Mammary epithelial cell (primary cell): ENCODE measurements at regions of chrX and their contacts with region 1.

Region 1: DNA sequence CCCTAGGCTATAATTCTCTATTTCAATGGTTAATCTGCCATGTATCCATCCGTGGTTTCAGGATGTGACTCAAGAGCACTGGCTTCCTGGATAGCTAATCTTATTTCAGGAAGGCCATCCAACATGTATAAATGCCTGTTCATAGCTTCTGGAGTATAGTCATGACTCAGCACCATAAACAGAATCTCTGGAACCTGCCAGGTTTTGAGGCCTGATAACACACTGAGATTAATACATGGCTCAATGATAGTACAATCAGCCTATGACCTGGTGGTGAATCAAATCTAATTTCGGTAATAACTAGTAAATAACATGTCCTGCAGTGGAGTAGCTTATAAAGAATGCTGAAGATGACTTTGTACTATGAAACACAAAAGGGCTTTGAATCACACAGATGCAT is 5.7 kb upstream of the IL13RA2 start:
- DNase-seq: peak; percentile 90
- H3K4me3 ChIP-seq: no peak overlapping the region
- H3K27ac ChIP-seq: peak overlapping the region; percentile 69
- H3K4me1 ChIP-seq: peaks cover 27% of the 10 kb centered on the region
- H3K27me3 ChIP-seq: no peaks in the 10 kb centered on the region
- CTCF ChIP-seq: no peak

Region 2: DNA sequence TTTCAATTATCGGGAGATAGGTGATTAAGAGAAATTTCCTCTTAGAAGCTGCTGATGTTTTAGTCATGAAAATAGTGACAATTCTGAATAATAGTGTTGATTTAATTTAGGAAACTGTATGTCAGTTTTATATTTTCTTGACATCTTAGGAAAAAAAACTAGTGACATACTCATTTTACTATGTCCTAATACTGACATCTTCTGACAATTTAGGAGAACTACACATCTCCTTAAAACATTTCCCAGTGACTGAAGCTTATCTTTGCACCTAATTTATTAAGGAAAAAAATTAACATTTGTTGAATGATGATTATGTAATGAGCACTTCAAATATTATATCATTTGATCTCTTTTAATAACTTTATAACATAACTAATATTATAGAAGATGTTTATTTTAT is 124.1 kb after region 1 on chrX:
- CTCF ChIA-PET with region 1: no interaction called
- dilution Hi-C with region 1: no loop called
- in situ Hi-C with region 1: no loop called
- intact Hi-C with region 1: loop called (anchors 10 kb)
- DNase-seq: peak; percentile 4
- H3K4me3 ChIP-seq: no peak overlapping the region
- H3K27ac ChIP-seq: no peak overlapping the region
- H3K4me1 ChIP-seq: no peaks in the 10 kb centered on the region
- H3K27me3 ChIP-seq: peaks cover 3% of the 10 kb centered on the region
- CTCF ChIP-seq: peak; percentile 47 to 57